Psoas muscle (tissue), 8 donors: ENCODE measurements at regions of chr18 and their contacts with region 1.

Region 1: DNA sequence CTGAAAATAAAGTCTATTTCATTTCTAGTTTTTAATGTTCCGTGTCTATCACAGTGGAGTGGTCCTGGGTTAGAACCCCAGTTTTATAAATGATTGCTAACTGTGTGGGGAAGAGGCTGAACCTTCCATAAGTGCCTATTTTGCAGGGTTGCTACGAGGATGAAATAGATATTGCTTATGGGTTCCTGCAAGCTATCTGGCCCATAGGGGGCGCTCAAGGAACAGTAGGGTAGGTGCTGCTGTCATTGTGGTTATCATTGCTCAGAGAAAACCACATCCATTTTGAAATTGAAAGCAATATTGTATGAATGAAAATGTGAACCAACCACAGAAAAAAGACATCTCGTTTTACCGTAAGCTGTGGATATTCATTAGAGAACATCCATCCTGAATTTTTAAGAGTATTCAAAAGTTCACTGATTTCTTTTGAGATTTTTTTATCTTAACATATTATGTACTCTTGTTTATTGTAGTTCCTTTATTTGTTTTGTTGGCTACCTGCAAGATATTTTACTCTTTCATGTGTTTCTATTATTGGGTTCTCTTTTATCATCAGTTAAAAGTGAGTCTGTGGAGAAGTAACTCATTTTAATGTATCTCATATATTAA is 261.6 kb downstream of the NAPG start:
- DNase-seq: peak; percentile 56 to 58
- ATAC-seq: no peak
- H3K4me3 ChIP-seq: no peak overlapping the region
- H3K27ac ChIP-seq: no peak overlapping the region
- H3K4me1 ChIP-seq: no peaks in the 10 kb centered on the region
- H3K27me3 ChIP-seq: peaks cover 0 to 1% (median 0%) of the 10 kb centered on the region in 3 donors
- CTCF ChIP-seq: peak; percentile 61

Region 2: GRCh38 chr18:11040823-11041656 is 253.6 kb after region 1 on chr18:
- intact Hi-C with region 1: loop called in 1 of 2 experiments (anchors 2 kb)
- DNase-seq: no peak
- ATAC-seq: peak in 3 of 4 donors; percentile 51 to 64 (median 61)
- H3K4me3 ChIP-seq: no peak overlapping the region
- H3K27ac ChIP-seq: no peak overlapping the region
- H3K4me1 ChIP-seq: no peaks in the 10 kb centered on the region
- H3K27me3 ChIP-seq: peaks cover 0 to 2% (median 0%) of the 10 kb centered on the region in 3 donors
- CTCF ChIP-seq: peak; percentile 81

Region 3: GRCh38 chr18:12264864-12265263 is 1477.5 kb after region 1 on chr18:
- intact Hi-C with region 1: loop called in 1 of 2 experiments (anchors 5 kb)
- DNase-seq: no peak
- ATAC-seq: no peak
- H3K4me3 ChIP-seq: no peak overlapping the region
- H3K27ac ChIP-seq: no peak overlapping the region
- H3K4me1 ChIP-seq: no peaks in the 10 kb centered on the region
- H3K27me3 ChIP-seq: peaks cover 0 to 9% (median 0%) of the 10 kb centered on the region in 3 donors
- CTCF ChIP-seq: no peak